ENCODE measurements at regions of chr3 and their contacts with region 1.

Region 1: DNA sequence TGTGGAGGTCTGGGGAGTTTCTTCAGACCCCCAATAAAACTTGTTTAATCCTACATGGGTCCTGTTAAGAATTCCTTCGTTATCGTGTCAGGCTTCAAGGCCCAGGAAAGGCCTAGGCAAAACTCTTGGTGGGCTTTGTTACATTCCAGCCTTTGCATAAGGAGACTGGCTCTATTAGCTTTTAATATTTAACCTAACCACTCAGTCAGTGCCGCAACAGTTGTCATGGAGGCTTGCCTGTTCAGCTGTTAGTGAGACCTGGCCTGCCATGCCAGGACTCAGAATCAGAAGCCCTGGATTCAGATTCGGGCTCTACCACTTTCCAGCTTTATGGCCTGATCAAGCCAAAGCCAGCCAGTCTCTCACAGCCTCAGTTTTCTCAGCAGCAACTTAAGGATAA is 19.6 kb downstream of the EIF1B start:
- DNase-seq: no peak
- H3K4me3 Mint-ChIP-seq: no peak overlapping the region
- H3K27ac Mint-ChIP-seq: no peak overlapping the region
- H3K4me1 Mint-ChIP-seq: no peaks in the 10 kb centered on the region
- H3K27me3 Mint-ChIP-seq: no peaks in the 10 kb centered on the region
- CTCF ChIP-seq: no peak

Region 2: DNA sequence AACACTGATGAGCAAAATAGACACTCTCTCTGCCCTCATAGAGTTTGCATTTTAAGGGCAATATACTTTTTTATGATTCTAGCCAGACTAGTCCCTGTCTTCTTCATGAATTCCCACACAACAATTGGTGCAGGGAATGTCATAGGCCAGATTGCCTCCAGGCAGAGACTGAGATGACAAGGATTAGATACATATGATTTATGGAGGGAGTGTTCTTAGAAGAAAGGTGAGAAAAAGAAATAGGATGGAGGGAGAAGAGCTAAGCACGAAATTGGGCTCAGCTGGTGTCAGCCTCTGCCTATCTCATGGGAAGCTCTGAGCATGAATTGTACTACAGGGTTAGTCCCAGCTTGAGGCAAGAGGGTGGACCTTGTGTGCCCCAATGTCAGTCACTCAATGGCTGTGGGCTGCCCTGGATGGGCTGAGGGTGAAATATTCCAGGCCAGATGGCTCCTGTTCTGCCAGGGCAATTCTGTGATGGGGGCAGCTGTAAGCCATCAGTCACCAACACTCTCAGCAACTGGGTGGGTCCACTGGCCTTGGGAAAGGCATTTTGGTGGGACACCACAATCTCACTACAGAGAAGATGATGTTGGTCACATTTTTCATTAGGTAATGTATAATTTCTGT is 11.6 kb after region 1 on chr3:
- CTCF ChIA-PET with region 1: interaction called, 22 read pairs
- POLR2A ChIA-PET with region 1: no interaction called
- intact Hi-C with region 1: no loop called
- DNase-seq: no peak
- H3K4me3 Mint-ChIP-seq: no peak overlapping the region
- H3K27ac Mint-ChIP-seq: no peak overlapping the region
- H3K4me1 Mint-ChIP-seq: no peaks in the 10 kb centered on the region
- H3K27me3 Mint-ChIP-seq: no peaks in the 10 kb centered on the region
- CTCF ChIP-seq: no peak

Region 3: GRCh38 chr3:40432793-40433192 is 103.7 kb after region 1 on chr3:
- CTCF ChIA-PET with region 1: interaction called, 37 read pairs
- POLR2A ChIA-PET with region 1: interaction called, 3 read pairs
- intact Hi-C with region 1: no loop called
- DNase-seq: no peak
- H3K4me3 Mint-ChIP-seq: no peak overlapping the region
- H3K27ac Mint-ChIP-seq: no peak overlapping the region
- H3K4me1 Mint-ChIP-seq: no peaks in the 10 kb centered on the region
- H3K27me3 Mint-ChIP-seq: no peaks in the 10 kb centered on the region
- CTCF ChIP-seq: no peak